BJ (cell line): ENCODE measurements at regions of chr15 and their contacts with region 1.

Region 1: DNA sequence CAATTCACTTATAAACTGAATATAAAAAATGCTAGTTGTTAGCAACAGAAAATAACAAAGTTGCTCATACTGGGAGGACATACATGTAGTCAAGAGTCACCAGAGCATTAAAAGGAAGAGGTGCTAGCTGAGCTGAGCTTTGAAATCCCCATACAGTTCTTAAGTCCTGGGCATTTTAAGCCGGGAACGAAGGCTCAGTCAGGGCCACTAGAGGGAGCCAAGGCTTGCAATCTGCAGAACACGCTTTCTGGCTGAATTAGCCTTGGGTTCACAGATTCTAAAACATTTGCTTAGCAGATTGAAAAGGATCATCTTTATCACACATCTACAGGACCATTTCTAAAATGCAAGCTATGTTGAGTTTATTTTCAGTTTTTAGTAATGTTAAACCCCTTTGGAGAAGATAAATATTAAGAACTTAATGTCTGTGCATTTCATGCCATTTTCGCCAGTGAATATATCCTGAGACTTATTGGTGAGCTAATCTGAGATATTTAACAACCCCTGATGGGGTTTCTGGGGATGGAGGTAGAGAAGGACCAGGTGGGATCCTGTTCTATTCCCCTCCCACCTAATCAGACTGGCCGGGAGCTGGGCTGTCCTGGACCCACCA is 26.3 kb upstream of the MNS1 start:
- DNase-seq: peak; percentile 18
- H3K4me3 ChIP-seq: no peak overlapping the region
- H3K27me3 ChIP-seq: no peaks in the 10 kb centered on the region; the same call in 1 of the 2 replicates
- CTCF ChIP-seq: peak; percentile 96

Region 2: GRCh38 chr15:55928955-55929354 is 562.3 kb before region 1 on chr15:
- CTCF ChIA-PET with region 1: no interaction called
- POLR2A ChIA-PET with region 1: no interaction called
- DNase-seq: no peak
- H3K4me3 ChIP-seq: no peak overlapping the region
- H3K27me3 ChIP-seq: no peaks in the 10 kb centered on the region
- CTCF ChIP-seq: no peak

Region 3: DNA sequence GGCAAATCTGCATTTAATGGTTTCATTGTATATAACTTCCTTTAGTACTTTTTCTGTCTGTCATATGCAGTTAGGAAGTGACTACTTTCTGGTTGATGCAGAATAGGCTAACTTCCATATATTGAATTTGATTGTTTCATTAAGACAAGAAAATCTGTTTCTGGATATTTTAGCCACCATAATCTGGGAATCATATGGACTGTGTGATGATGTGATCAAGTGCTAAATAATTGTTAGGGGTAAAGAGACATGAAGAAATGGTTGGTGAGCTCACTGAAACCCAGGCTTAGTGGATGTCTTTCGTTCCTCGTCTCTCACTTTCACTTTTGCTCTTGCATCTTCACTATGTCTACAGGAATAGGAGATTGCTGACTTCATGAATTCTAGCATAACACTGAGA is 22.8 kb before region 1 on chr15:
- CTCF ChIA-PET with region 1: interaction called, 12 read pairs
- POLR2A ChIA-PET with region 1: no interaction called
- DNase-seq: no peak
- H3K4me3 ChIP-seq: no peak overlapping the region
- H3K27me3 ChIP-seq: peaks cover 7% of the 10 kb centered on the region
- CTCF ChIP-seq: no peak

Region 4: GRCh38 chr15:56475351-56475750 is 15.9 kb before region 1 on chr15:
- CTCF ChIA-PET with region 1: interaction called, 10 read pairs
- POLR2A ChIA-PET with region 1: no interaction called
- DNase-seq: no peak
- H3K4me3 ChIP-seq: no peak overlapping the region
- H3K27me3 ChIP-seq: peaks cover 6% of the 10 kb centered on the region
- CTCF ChIP-seq: no peak

Region 5: DNA sequence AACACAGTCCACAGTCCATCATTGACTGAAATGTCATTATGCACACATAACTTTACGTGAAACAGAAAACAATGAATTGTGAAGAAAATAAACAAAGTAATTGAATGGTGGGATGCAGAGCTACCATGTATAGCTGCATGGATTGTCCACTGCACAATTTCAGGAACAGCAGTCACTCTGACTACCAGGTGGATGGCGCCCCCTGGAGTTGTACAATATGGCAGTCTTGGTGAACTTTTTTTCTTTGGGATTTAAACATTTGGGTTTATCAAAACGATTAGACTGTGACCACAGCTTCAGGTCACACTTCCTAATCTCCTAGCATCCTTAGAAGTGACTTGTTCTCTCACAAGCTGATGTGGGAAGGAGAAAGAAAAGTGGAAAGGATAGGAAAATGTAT is 378.4 kb after region 1 on chr15:
- CTCF ChIA-PET with region 1: interaction called, 73 read pairs
- POLR2A ChIA-PET with region 1: no interaction called
- DNase-seq: no peak
- H3K4me3 ChIP-seq: no peak overlapping the region
- H3K27me3 ChIP-seq: no peaks in the 10 kb centered on the region
- CTCF ChIP-seq: peak; percentile 49

Region 6: GRCh38 chr15:57146506-57147201 is 655.4 kb after region 1 on chr15:
- CTCF ChIA-PET with region 1: interaction called, 29 read pairs
- POLR2A ChIA-PET with region 1: no interaction called
- DNase-seq: no peak
- H3K4me3 ChIP-seq: no peak overlapping the region
- H3K27me3 ChIP-seq: no peaks in the 10 kb centered on the region
- CTCF ChIP-seq: peak; percentile 69

Region 7: DNA sequence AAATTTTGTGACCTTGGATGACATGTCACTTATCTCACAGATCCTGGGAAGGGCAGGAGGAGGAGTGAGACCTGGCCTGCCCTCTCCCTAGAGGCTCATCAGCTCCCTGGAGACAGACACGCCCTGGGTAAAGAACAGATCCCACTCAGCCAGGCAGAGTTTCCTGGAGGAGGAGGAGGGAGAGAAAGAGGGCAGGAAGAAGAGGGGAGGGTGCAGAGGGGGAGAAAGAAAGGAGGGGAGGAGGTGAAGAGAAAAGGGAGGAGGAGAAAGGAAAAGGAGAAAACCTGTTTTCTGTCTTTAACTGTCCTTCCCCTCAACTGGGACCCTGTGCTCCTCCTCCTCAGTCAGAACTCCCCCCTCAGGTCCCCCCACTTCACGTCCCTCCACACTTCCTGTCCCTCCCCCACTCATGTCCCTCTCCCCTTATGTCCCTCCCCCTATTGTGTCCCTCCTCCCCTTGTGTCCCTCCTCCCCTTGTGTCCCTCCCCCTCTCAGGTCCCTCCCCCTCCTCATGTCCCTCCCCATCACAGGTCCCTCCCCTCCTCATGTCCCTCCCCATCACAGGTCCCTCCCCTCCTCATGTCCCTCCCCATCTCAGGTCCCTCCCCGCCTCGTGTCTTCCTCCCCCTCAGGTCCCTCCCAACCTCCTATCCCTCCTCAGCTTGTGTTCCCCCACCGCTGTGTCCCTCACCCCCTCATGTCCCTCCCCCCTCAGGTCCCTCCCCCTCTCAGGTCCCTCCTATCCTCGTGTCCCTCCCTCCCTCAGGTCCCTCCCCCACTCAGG is 832.8 kb after region 1 on chr15:
- CTCF ChIA-PET with region 1: interaction called, 3 read pairs
- POLR2A ChIA-PET with region 1: interaction called, 13 read pairs
- DNase-seq: peak; percentile 34
- H3K4me3 ChIP-seq: no peak overlapping the region
- H3K27me3 ChIP-seq: no peaks in the 10 kb centered on the region
- CTCF ChIP-seq: no peak